PC-3 (cell line): ENCODE measurements at regions of chr1 and their contacts with region 1.

Region 1: GRCh38 chr1:184792450-184792969 is 37.9 kb upstream of the EDEM3 start:
- DNase-seq: peak; percentile 93
- ATAC-seq: peak; percentile 98
- H3K4me3 ChIP-seq: peak overlapping the region; percentile 17
- H3K27ac ChIP-seq: peak overlapping the region; percentile 100
- H3K4me1 ChIP-seq: peaks cover 42% of the 10 kb centered on the region
- H3K27me3 ChIP-seq: no peaks in the 10 kb centered on the region
- CTCF ChIP-seq: no peak

Region 2: GRCh38 chr1:184743062-184743756 is 49.3 kb before region 1 on chr1:
- CTCF ChIA-PET with region 1: no interaction called
- POLR2A ChIA-PET with region 1: no interaction called
- intact Hi-C with region 1: loop called (anchors 2 kb)
- DNase-seq: peak; percentile 51
- ATAC-seq: peak; percentile 86
- H3K4me3 ChIP-seq: no peak overlapping the region
- H3K27ac ChIP-seq: peak overlapping the region; percentile 81
- H3K4me1 ChIP-seq: peaks cover 33% of the 10 kb centered on the region
- H3K27me3 ChIP-seq: no peaks in the 10 kb centered on the region
- CTCF ChIP-seq: no peak